ENCODE measurements at regions of chrX and their contacts with region 1.

Region 1: GRCh38 chrX:18995221-18995620 is 11.3 kb upstream of the PHKA2 start:
- DNase-seq: peak in 1 of 2 experiments; percentile 93
- H3K4me3 ChIP-seq: peak overlapping the region; percentile 39
- H3K27ac ChIP-seq: peak overlapping the region; percentile 98
- H3K4me1 ChIP-seq: peaks cover 44% of the 10 kb centered on the region
- H3K27me3 ChIP-seq: no peaks in the 10 kb centered on the region
- CTCF ChIP-seq: no peak

Region 2: GRCh38 chrX:18917831-18918230 is 77.4 kb before region 1 on chrX:
- CTCF ChIA-PET with region 1: no interaction called
- POLR2A ChIA-PET with region 1: no interaction called
- intact Hi-C with region 1: no loop called
- DNase-seq: no peak
- H3K4me3 ChIP-seq: no peak overlapping the region
- H3K27ac ChIP-seq: no peak overlapping the region
- H3K4me1 ChIP-seq: no peaks in the 10 kb centered on the region
- H3K27me3 ChIP-seq: no peaks in the 10 kb centered on the region
- CTCF ChIP-seq: no peak

Region 3: GRCh38 chrX:18984381-18985185 is 10.6 kb before region 1 on chrX:
- CTCF ChIA-PET with region 1: no interaction called
- POLR2A ChIA-PET with region 1: interaction called, 16 read pairs
- intact Hi-C with region 1: no loop called
- DNase-seq: peak; percentile 72 to 85
- H3K4me3 ChIP-seq: peak overlapping the region; percentile 93
- H3K27ac ChIP-seq: peak overlapping the region; percentile 76
- H3K4me1 ChIP-seq: peaks cover 14% of the 10 kb centered on the region
- H3K27me3 ChIP-seq: no peaks in the 10 kb centered on the region
- CTCF ChIP-seq: peak; percentile 52; the same call in 1 of the 2 replicates

Measured in PC-9 (cell line).